Heart right ventricle (tissue), 16 donors: ENCODE measurements at regions of chr20 and their contacts with region 1.

Region 1: DNA sequence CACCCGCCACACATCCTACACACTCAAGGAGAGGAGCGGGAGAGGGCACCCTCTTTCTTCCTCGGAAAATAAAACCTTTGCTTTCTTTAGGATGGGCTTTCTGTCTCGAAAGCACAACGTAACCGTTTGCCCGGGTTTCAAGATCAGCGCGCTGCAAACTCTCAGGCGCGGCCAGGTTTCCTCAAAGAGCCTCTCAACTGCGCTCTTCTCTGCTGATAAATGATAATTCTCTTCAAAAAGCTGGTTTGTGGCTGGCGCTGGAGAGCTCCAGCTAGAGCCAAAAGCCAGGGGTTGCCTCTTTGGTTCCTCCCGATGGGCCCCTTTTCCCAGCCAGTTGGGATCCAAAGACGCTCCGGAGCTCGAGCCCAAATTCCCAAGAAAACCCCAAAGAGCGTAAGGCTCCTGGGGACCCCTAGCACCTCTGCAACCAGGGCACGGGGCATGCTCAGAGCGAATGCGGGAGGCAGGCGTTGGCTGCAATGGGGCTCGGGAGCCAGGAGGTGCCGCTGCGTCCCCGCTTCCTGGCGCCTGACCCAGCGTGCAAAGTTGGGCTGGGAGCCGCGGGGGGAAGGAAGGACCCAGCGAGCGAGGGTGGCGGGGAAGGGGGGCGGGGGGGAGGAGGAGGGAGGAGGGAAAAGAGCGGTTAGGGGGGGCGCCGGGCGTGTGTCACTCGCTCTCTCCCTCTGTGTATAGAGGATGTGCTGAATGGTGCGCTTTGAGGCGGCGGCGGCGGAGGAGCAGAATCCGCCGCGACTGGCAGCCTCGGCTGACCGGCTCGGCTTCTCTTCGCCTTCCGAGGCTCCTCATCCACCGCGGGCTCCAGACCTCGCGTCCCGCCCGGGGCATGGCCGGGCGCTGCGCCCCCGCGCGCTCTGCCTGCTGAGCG is at the start of gene PLCB1:
- DNase-seq: peak; percentile 86 to 88
- ATAC-seq: peak; percentile 89 to 97 (median 94)
- H3K4me3 ChIP-seq: peak within 1 kb of the TSS; percentile 60 to 95 (median 80)
- H3K27ac ChIP-seq: peak within 1 kb of the TSS; percentile 72 to 90 (median 86)
- H3K4me1 ChIP-seq: peaks cover 0 to 31% (median 9%) of the 10 kb centered on the region in 9 donors
- H3K27me3 ChIP-seq: peaks cover 0 to 19% (median 0%) of the 10 kb centered on the region in 7 donors
- CTCF ChIP-seq: peak; percentile 77 to 91 (median 87)
- total RNA-seq, gene PLCB1: 3.6 to 12.7 (median 7.5) TPM

Region 2: GRCh38 chr20:8049310-8049709 is 82.5 kb before region 1 on chr20:
- intact Hi-C with region 1: loop called in 6 of 10 experiments (anchors 5 to 10 kb)
- DNase-seq: no peak
- ATAC-seq: no peak
- H3K4me3 ChIP-seq: no peak overlapping the region
- H3K27ac ChIP-seq: no peak overlapping the region
- H3K4me1 ChIP-seq: peaks cover 0 to 3% (median 0%) of the 10 kb centered on the region in 9 donors
- H3K27me3 ChIP-seq: no peaks in the 10 kb centered on the region
- CTCF ChIP-seq: no peak

Region 3: DNA sequence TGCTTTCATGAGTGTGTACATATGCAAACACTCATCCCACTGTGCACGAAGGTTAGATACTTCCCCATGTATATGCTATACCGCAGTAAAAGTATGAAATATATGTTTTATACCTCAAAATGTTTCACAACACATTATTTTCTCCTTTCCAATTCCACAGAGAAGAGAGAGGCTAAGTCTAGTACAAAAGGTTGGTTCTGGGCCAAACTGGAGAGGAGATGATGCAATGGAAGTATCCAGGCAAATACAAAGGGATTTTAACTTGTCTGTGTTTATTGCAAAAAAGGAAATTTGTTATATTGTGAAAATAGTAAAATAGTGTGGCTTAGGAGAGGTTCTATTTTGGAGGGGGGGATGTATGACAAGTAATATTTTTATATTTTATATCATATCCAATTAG is 112.8 kb after region 1 on chr20:
- intact Hi-C with region 1: loop called in 1 of 10 experiments (anchors 10 kb)
- DNase-seq: peak in 1 of 2 donors; percentile 69
- ATAC-seq: peak in 7 of 8 donors; percentile 47 to 86 (median 79)
- H3K4me3 ChIP-seq: no peak overlapping the region
- H3K27ac ChIP-seq: peak overlapping the region in 5 of 10 donors; percentile 15 to 60 (median 39)
- H3K4me1 ChIP-seq: peaks cover 0 to 54% (median 32%) of the 10 kb centered on the region in 9 donors
- H3K27me3 ChIP-seq: no peaks in the 10 kb centered on the region
- CTCF ChIP-seq: no peak

Region 4: GRCh38 chr20:8389381-8390036 is 257.7 kb after region 1 on chr20:
- intact Hi-C with region 1: loop called in 9 of 10 experiments (anchors 1 to 5 kb)
- DNase-seq: no peak
- ATAC-seq: peak in 7 of 8 donors; percentile 12 to 59 (median 48)
- H3K4me3 ChIP-seq: no peak overlapping the region
- H3K27ac ChIP-seq: peak overlapping the region in 7 of 10 donors; percentile 6 to 61 (median 45)
- H3K4me1 ChIP-seq: peaks cover 0 to 63% (median 24%) of the 10 kb centered on the region in 9 donors
- H3K27me3 ChIP-seq: no peaks in the 10 kb centered on the region
- CTCF ChIP-seq: peak; percentile 47 to 72 (median 59)

Region 5: DNA sequence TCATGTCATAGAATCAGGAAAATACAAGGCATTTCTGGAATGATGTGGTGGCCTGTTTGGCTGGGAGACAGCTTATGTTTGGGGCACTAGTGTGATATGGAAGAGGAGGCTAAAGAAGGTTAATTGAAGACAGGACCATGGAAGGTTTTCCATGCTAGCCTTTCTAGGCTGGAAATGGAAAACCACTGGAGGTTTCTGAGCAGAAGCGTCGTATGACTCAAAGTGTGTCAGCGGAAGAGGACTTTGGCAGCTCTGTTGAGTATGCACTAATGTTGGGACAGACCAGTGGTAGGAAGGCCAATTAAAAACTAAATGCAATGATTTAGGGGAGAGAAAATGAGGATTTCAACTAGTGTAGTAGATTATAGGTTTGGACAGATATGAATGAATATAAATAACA is 413.4 kb after region 1 on chr20:
- intact Hi-C with region 1: loop called in 3 of 10 experiments (anchors 5 to 10 kb)
- DNase-seq: no peak
- ATAC-seq: peak in 1 of 8 donors; percentile 53
- H3K4me3 ChIP-seq: no peak overlapping the region
- H3K27ac ChIP-seq: no peak overlapping the region
- H3K4me1 ChIP-seq: peaks cover 3 to 59% (median 36%) of the 10 kb centered on the region in 9 donors
- H3K27me3 ChIP-seq: no peaks in the 10 kb centered on the region
- CTCF ChIP-seq: no peak

Region 6: DNA sequence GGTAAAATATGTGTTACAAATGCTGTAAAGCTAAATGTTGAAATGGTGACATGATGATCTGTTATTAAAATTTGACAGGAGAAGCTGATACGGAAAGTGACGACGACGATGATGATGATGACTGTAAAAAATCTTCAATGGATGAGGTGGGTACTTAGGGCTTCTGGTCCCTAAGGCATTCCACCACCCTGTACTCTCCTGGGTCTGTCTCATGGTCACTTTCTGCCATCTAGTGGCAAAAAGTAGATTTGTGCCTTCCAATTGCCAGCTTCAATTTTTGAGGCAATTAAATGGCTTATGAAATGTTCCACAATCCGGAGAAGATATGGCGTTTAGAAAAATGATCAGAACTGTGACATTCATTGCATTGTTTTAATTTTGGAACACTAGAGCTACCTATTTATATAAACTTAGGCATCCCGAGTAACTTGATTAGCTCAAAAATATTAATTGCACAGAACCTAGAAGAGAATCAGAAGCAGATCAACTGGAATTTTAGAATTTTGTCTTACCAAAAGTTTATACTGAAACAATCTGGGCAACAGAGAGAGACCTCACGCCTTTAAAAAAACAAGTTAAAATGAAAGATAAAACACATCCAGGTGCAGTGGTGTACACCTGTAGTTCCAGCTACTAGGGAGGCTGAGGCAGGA is 590.6 kb after region 1 on chr20:
- intact Hi-C with region 1: loop called (anchors 1 to 5 kb)
- DNase-seq: peak in 1 of 2 donors; percentile 43
- ATAC-seq: peak in 7 of 8 donors; percentile 74 to 93 (median 84)
- H3K4me3 ChIP-seq: no peak overlapping the region
- H3K27ac ChIP-seq: no peak overlapping the region
- H3K4me1 ChIP-seq: peaks cover 0 to 12% (median 0%) of the 10 kb centered on the region in 9 donors
- H3K27me3 ChIP-seq: no peaks in the 10 kb centered on the region
- CTCF ChIP-seq: peak; percentile 58 to 87 (median 76)